ENCODE measurements at regions of chr6 and their contacts with region 1.

Region 1: DNA sequence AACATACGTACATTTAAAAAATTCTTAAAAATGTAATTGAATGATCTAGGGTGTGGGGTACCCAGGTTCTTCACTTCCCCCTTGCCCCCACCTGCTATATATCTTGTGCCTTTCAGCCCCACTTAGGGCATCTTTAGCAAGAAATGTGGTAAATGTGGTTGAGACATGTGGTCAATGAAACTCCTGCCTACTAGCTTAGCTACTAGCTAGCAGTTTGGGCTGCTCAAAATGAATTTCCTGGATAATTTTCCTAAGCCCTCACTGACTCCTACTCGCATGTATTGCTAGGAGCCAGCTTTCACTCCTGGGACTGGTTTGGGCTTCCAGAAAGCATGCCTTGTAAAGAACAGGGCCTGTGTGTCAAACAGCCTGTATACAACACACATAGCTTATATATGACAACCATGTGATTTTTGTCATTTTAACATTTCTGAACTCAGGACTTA is 257.3 kb downstream of the ATXN1 start:
- DNase-seq: peak; percentile 50 to 89 (median 85)
- H3K4me3 ChIP-seq: peak overlapping the region in 3 of 7 experiments; percentile 16 to 37 (median 23)
- H3K27ac ChIP-seq: no peak overlapping the region
- H3K4me1 ChIP-seq: peaks cover 12 to 24% (median 15%) of the 10 kb centered on the region in 4 experiments
- H3K27me3 ChIP-seq: no peaks in the 10 kb centered on the region

Region 2: DNA sequence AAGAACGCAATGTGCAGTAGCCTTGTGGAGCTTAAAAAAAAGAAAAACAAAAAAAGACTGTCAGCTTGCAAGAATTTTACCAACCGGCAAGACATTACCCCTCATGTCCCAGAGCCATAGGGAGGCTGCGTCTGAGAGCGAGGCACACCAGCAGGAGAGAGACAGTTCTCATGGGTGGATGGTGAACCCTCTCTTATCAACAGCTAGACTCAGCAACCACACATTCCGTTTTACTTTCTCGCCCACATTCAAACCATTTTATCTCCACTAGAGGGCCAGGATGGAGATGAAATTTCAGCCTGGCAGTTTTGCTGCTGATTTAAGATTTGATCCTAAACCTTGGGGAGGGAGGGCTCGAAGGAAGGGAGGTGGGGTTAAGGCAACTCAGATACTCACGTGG is 10.3 kb after region 1 on chr6:
- CTCF ChIA-PET with region 1: interaction called, 11 read pairs
- POLR2A ChIA-PET with region 1: no interaction called
- DNase-seq: peak; percentile 77 to 86 (median 84)
- H3K4me3 ChIP-seq: peak overlapping the region in 1 of 7 experiments; percentile 8
- H3K27ac ChIP-seq: no peak overlapping the region
- H3K4me1 ChIP-seq: peaks cover 17 to 48% (median 38%) of the 10 kb centered on the region in 4 experiments
- H3K27me3 ChIP-seq: no peaks in the 10 kb centered on the region

Measured in common myeloid progenitor, CD34-positive (primary cell).